ENCODE measurements at regions of chr5 and their contacts with region 1.

Region 1: GRCh38 chr5:119267958-119268386 is 87.8 kb upstream of the TNFAIP8 start:
- DNase-seq: peak; percentile 89 to 96 (median 95)
- ATAC-seq: peak; percentile 92 to 95 (median 94)
- H3K4me3 ChIP-seq: peak overlapping the region; percentile 41 to 90 (median 72)
- H3K27ac ChIP-seq: peak overlapping the region; percentile 37 to 97 (median 92)
- H3K4me1 ChIP-seq: peaks cover 0 to 44% (median 6%) of the 10 kb centered on the region in 12 donors
- H3K27me3 ChIP-seq: no peaks in the 10 kb centered on the region
- CTCF ChIP-seq: peak in 8 of 12 donors; percentile 18 to 97 (median 70)
- POLR2A ChIP-seq: no peak

Region 2: DNA sequence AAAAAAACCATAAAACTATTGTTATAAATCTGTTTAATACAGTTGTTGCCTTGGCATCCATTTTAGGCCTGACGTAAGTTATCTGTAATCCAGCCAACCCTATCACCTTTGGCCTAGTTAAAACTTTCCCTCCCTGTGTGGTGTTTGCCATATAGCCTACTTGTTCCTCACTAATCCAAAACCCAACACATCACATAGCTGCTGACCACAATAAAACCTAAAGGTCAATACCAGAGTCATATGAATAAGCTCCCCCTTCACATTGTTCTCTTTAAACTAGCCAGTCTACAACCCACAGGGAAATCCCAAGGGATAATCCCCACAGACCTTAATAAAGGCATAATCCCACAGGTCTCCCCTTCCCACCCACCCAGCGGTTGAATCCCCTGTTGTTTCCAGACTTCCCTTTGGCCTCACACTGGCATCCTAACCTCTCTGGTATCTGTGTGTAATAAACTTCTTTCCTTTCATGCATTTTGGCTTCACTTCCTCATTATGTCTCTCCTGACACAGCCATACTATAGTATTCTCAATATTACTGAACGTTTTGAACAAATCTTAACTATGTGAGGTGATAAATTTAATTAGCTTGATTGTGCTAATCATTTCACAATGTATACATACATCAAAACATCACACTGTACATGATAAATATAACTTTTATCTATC is 330.4 kb before region 1 on chr5:
- intact Hi-C with region 1: no loop called
- DNase-seq: no peak
- ATAC-seq: peak in 2 of 4 donors; percentile 36 to 56
- H3K4me3 ChIP-seq: no peak overlapping the region
- H3K27ac ChIP-seq: no peak overlapping the region
- H3K4me1 ChIP-seq: no peaks in the 10 kb centered on the region
- H3K27me3 ChIP-seq: no peaks in the 10 kb centered on the region
- CTCF ChIP-seq: no peak
- POLR2A ChIP-seq: no peak

Region 3: GRCh38 chr5:118987988-118988865 is 279.7 kb before region 1 on chr5 and contains the start of gene DTWD2:
- intact Hi-C with region 1: loop called in 2 of 10 experiments (anchors 5 kb)
- DNase-seq: peak; percentile 92 to 97 (median 96)
- ATAC-seq: peak; percentile 98 to 100 (median 99)
- H3K4me3 ChIP-seq: peak within 1 kb of the TSS; percentile 62 to 93 (median 82)
- H3K27ac ChIP-seq: peak within 1 kb of the TSS; percentile 75 to 98 (median 96)
- H3K4me1 ChIP-seq: peaks cover 0 to 23% (median 12%) of the 10 kb centered on the region in 12 donors
- H3K27me3 ChIP-seq: no peaks in the 10 kb centered on the region
- CTCF ChIP-seq: peak; percentile 80 to 98 (median 91)
- POLR2A ChIP-seq: peak in 1 of 2 donors; percentile 62
- total RNA-seq, gene DTWD2: 6.1 to 16.0 (median 12.2) TPM

Region 4: DNA sequence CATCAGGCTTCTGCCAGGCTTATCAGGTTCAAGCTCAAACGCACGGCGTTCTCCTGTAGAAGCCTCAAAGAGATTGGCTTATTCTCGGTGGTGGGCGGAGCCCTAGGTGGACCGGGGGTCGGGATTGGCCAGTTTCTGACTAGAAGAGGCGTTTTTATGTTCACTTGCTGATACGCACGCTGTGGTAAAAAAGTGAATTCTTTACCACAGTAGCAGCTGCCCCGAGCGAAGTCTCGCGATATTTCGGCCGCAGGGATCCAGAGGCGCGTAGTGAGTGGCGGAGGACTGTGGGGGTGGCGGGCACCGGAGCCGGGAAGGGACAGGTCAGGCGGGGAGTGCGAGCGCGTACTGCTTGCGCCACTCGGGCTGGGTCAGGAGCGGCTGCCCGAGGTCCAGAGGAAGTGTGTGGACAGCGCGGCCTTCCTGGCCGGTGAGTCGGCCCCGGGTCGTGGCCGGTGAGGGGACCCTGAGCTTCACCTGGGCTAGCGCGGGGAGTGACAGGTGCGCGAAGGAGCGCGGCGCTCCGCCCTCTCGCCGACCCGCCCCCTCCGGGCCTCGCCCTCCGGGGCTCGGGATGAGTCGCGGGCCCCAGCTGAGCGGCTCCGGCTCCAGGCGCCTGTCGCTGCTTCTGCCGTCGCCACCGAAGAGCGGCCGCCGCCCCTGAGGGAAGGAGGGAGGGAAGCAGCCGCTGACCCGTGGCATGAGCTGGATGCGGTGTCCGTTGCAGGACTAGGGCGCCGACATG is 197.0 kb before region 1 on chr5 and contains the start of gene DMXL1:
- intact Hi-C with region 1: loop called in 3 of 10 experiments (anchors 2 to 10 kb)
- DNase-seq: peak; percentile 99 to 100 (median 100)
- ATAC-seq: peak; percentile 97 to 98 (median 98)
- H3K4me3 ChIP-seq: peak within 1 kb of the TSS; percentile 71 to 100 (median 92)
- H3K27ac ChIP-seq: peak within 1 kb of the TSS; percentile 89 to 99 (median 96)
- H3K4me1 ChIP-seq: peaks cover 0 to 44% (median 25%) of the 10 kb centered on the region in 12 donors
- H3K27me3 ChIP-seq: peaks cover 0 to 3% (median 0%) of the 10 kb centered on the region in 9 donors
- CTCF ChIP-seq: no peak
- POLR2A ChIP-seq: peak in 1 of 2 donors; percentile 69
- total RNA-seq, gene DMXL1: 22.4 to 39.0 (median 27.7) TPM

Region 5: GRCh38 chr5:119218830-119219782 is 48.9 kb before region 1 on chr5:
- intact Hi-C with region 1: loop called in 1 of 10 experiments (anchors 10 kb)
- DNase-seq: no peak
- ATAC-seq: no peak
- H3K4me3 ChIP-seq: no peak overlapping the region
- H3K27ac ChIP-seq: no peak overlapping the region
- H3K4me1 ChIP-seq: peaks cover 0 to under 1% (median 0%) of the 10 kb centered on the region in 12 donors
- H3K27me3 ChIP-seq: no peaks in the 10 kb centered on the region
- CTCF ChIP-seq: no peak
- POLR2A ChIP-seq: no peak

Region 6: GRCh38 chr5:119322948-119323537 is 55.1 kb after region 1 on chr5:
- intact Hi-C with region 1: loop called in 2 of 10 experiments (anchors 1 to 5 kb)
- DNase-seq: no peak
- ATAC-seq: no peak
- H3K4me3 ChIP-seq: no peak overlapping the region
- H3K27ac ChIP-seq: peak overlapping the region in 6 of 12 donors; percentile 26 to 86 (median 46)
- H3K4me1 ChIP-seq: peaks cover 0 to 93% (median 8%) of the 10 kb centered on the region in 12 donors
- H3K27me3 ChIP-seq: no peaks in the 10 kb centered on the region
- CTCF ChIP-seq: no peak
- POLR2A ChIP-seq: no peak

Region 7: DNA sequence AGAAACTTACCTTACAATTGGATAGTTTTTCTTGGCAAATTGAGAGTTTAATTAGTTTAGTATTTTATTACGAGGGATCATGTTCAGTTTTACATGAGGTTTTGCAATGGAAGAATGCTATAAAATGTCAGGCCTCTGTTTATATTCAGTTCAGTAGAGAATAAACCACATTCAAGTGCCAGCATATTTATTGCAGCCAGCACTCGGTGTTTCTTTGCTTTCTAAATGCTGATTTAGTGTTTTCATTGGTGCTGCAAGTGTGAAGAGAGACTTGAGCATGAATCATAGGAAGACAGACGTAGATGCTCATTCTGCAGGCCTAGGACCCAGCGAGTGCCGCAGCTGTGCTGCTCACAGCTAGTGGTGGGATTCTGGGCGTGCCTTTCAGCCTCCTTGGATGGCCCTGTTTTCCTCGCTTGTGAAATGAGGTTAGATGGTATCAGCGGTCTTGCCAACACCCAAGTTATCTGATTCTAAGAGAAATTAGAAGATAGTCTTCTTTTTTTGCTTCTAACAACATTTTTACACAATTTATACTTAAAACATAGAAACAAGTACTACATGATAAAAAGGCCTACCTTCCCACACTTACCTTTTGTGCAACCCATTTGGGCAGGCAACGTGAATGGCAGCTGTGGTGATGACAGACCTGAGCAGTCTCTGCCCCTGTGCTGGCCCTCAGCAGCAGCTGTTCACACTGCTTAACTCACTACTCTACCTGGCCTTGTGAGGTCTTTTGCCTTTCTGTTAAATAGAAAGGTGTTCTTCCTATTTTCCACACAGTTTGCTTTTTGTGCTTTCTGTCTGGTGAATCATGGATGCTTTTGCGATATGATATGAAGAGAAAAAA is 61.0 kb after region 1 on chr5:
- intact Hi-C with region 1: loop called in 5 of 10 experiments (anchors 1 to 10 kb)
- DNase-seq: no peak
- ATAC-seq: peak in 1 of 4 donors; percentile 21
- H3K4me3 ChIP-seq: no peak overlapping the region
- H3K27ac ChIP-seq: peak overlapping the region in 1 of 12 donors; percentile 86
- H3K4me1 ChIP-seq: peaks cover 0 to 95% (median under 1%) of the 10 kb centered on the region in 12 donors
- H3K27me3 ChIP-seq: no peaks in the 10 kb centered on the region
- CTCF ChIP-seq: no peak
- POLR2A ChIP-seq: no peak

Region 8: GRCh38 chr5:119336845-119337580 is 69.0 kb after region 1 on chr5:
- intact Hi-C with region 1: loop called in 5 of 10 experiments (anchors 5 to 10 kb)
- DNase-seq: no peak
- ATAC-seq: no peak
- H3K4me3 ChIP-seq: no peak overlapping the region
- H3K27ac ChIP-seq: peak overlapping the region in 9 of 12 donors; percentile 2 to 73 (median 39)
- H3K4me1 ChIP-seq: peaks cover 0 to 85% (median 11%) of the 10 kb centered on the region in 12 donors
- H3K27me3 ChIP-seq: no peaks in the 10 kb centered on the region
- CTCF ChIP-seq: no peak
- POLR2A ChIP-seq: no peak

Region 9: DNA sequence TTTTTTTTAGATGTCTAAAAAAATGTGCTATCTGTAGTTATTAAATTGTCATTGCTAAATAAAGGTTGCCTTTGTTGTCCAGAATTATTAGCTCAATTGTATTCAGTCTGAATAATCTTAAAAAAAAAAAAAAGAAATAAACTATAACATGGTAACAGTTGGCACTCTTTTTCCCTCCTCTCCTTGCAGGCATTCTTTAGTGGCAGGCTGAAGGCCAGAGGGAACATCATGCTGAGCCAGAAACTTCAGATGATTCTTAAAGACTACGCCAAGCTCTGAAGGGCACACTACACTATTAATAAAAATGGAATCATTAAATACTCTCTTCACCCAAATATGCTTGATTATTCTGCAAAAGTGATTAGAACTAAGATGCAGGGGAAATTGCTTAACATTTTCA is 273.7 kb after region 1 on chr5:
- intact Hi-C with region 1: no loop called
- DNase-seq: no peak
- ATAC-seq: no peak
- H3K4me3 ChIP-seq: no peak overlapping the region
- H3K27ac ChIP-seq: no peak overlapping the region
- H3K4me1 ChIP-seq: no peaks in the 10 kb centered on the region
- H3K27me3 ChIP-seq: no peaks in the 10 kb centered on the region
- CTCF ChIP-seq: no peak
- POLR2A ChIP-seq: no peak

Measured in heart left ventricle (tissue), 16 donors.